GM23248 (cell line): ENCODE measurements at regions of chr5 and their contacts with region 1.

Region 1: DNA sequence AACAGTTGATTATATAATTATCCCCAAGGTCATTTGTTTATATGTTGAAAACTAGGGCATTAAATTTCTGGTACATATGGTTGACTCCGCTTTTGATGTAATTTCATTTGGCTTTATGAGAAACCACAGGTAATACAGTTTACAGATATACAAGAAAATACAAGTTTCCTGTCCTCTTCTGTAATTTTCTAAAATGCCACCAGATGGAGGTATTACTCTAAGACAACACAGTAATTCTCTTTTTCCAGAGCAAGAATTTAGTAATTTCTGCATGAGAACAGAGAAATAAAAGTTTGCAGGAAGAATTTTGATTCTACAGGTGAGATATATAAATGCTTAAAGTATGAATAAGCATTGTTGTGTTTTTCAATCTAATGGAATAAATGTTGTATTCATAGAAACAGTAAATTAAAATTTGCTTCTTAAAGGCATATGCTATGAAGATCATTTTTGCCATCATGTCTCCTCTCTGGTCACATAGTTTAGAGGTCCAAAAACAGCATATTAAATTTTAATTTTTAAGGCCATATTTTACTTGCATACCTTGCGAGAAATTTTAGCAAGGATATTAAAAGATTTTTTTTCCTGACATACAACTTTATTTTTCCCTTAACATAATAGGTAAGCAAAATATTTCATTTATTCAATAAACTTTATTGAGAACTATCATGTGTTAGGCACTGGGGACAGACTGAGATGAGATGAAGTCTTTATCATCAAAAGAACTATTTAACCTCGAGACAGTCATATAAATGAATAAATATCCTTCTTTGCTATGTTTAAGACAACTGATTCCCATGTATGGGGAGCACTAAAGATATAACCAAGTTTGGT is 22.7 kb downstream of the CHD1 start:
- DNase-seq: peak; percentile 57
- H3K4me3 ChIP-seq: no peak overlapping the region
- H3K27ac ChIP-seq: no peak overlapping the region
- H3K4me1 ChIP-seq: peaks cover 22% of the 10 kb centered on the region
- H3K27me3 ChIP-seq: no peaks in the 10 kb centered on the region

Region 2: GRCh38 chr5:98433673-98434072 is 472.4 kb before region 1 on chr5:
- in situ Hi-C with region 1: no loop called
- DNase-seq: peak; percentile 71
- H3K4me3 ChIP-seq: no peak overlapping the region
- H3K27ac ChIP-seq: peak overlapping the region; percentile 8; the same call in 1 of the 2 replicates
- H3K4me1 ChIP-seq: peaks cover 25% of the 10 kb centered on the region
- H3K27me3 ChIP-seq: no peaks in the 10 kb centered on the region

Region 3: GRCh38 chr5:99032234-99033013 is 126.3 kb after region 1 on chr5:
- in situ Hi-C with region 1: loop called (anchors 5 kb)
- DNase-seq: peak; percentile 85
- H3K4me3 ChIP-seq: peak overlapping the region; percentile 46
- H3K27ac ChIP-seq: no peak overlapping the region
- H3K4me1 ChIP-seq: no peaks in the 10 kb centered on the region
- H3K27me3 ChIP-seq: no peaks in the 10 kb centered on the region